GM12878 (cell line): ENCODE measurements at regions of chr6 and their contacts with region 1.

Region 1: GRCh38 chr6:42402184-42402583 is 49.5 kb downstream of the TRERF1 start:
- DNase-seq: peak; percentile 74
- ATAC-seq: peak; percentile 99
- H3K4me3 ChIP-seq: no peak overlapping the region
- H3K27ac ChIP-seq: no peak overlapping the region
- H3K4me1 ChIP-seq: peaks cover 12% of the 10 kb centered on the region
- H3K27me3 ChIP-seq: no peaks in the 10 kb centered on the region
- CTCF ChIP-seq: no peak
- EP300 ChIP-seq: peak; percentile 91 to 93
- POLR2A ChIP-seq: no peak
- RAD21 ChIP-seq: peak; percentile 28; the same call in 1 of the 2 replicates

Region 2: GRCh38 chr6:42423244-42423643 is 21.1 kb after region 1 on chr6:
- CTCF ChIA-PET with region 1: interaction called, 8 read pairs
- POLR2A ChIA-PET with region 1: no interaction called
- RAD21 ChIA-PET with region 1: interaction called, 3 read pairs
- SMC1A ChIA-PET with region 1: interaction called, 11 read pairs
- in situ Hi-C with region 1: no loop called
- intact Hi-C with region 1: no loop called
- DNase-seq: peak; percentile 61
- ATAC-seq: peak; percentile 78
- H3K4me3 ChIP-seq: no peak overlapping the region
- H3K27ac ChIP-seq: no peak overlapping the region
- H3K4me1 ChIP-seq: peaks cover 52% of the 10 kb centered on the region
- H3K27me3 ChIP-seq: no peaks in the 10 kb centered on the region
- CTCF ChIP-seq: no peak
- EP300 ChIP-seq: peak; percentile 31 to 34; a peak in 1 of 4 replicates
- POLR2A ChIP-seq: no peak
- RAD21 ChIP-seq: no peak